ENCODE measurements at regions of chr22 and their contacts with region 1.

Region 1: GRCh38 chr22:29306835-29307614 is 575 bp downstream of the GAS2L1 start:
- DNase-seq: peak in 1 of 2 donors; percentile 52
- ATAC-seq: peak in 2 of 3 donors; percentile 22 to 46
- H3K4me3 ChIP-seq: peak overlapping the region; percentile 46
- H3K4me3 Mint-ChIP-seq: peak overlapping the region; percentile 84
- H3K27ac ChIP-seq: no peak overlapping the region
- H3K27ac Mint-ChIP-seq: peak overlapping the region in 1 of 2 donors; percentile 45
- H3K4me1 ChIP-seq: peaks cover 32% of the 10 kb centered on the region
- H3K4me1 Mint-ChIP-seq: peaks cover 0 to 16% of the 10 kb centered on the region in 2 donors
- H3K27me3 ChIP-seq: peaks cover 13% of the 10 kb centered on the region
- H3K27me3 Mint-ChIP-seq: peaks cover 1 to 29% of the 10 kb centered on the region in 2 donors
- CTCF ChIP-seq: no peak

Region 2: GRCh38 chr22:29288837-29289236 is 18.2 kb before region 1 on chr22:
- intact Hi-C with region 1: loop called (anchors 1 kb)
- DNase-seq: no peak
- ATAC-seq: no peak
- H3K4me3 ChIP-seq: no peak overlapping the region
- H3K4me3 Mint-ChIP-seq: no peak overlapping the region
- H3K27ac ChIP-seq: no peak overlapping the region
- H3K27ac Mint-ChIP-seq: peak overlapping the region; percentile 51 to 63
- H3K4me1 ChIP-seq: no peaks in the 10 kb centered on the region
- H3K4me1 Mint-ChIP-seq: peaks cover 32 to 39% of the 10 kb centered on the region in 2 donors
- H3K27me3 ChIP-seq: no peaks in the 10 kb centered on the region
- H3K27me3 Mint-ChIP-seq: no peaks in the 10 kb centered on the region
- CTCF ChIP-seq: no peak

Region 3: GRCh38 chr22:29320546-29320945 is 13.5 kb after region 1 on chr22:
- intact Hi-C with region 1: no loop called
- DNase-seq: no peak
- ATAC-seq: no peak
- H3K4me3 ChIP-seq: no peak overlapping the region
- H3K4me3 Mint-ChIP-seq: no peak overlapping the region
- H3K27ac ChIP-seq: no peak overlapping the region
- H3K27ac Mint-ChIP-seq: no peak overlapping the region
- H3K4me1 ChIP-seq: peaks cover 2% of the 10 kb centered on the region
- H3K4me1 Mint-ChIP-seq: no peaks in the 10 kb centered on the region
- H3K27me3 ChIP-seq: peaks cover 6% of the 10 kb centered on the region
- H3K27me3 Mint-ChIP-seq: peaks cover 12% of the 10 kb centered on the region in 2 donors
- CTCF ChIP-seq: no peak